WTC11 (cell line): ENCODE measurements at regions of chr7 and their contacts with region 1.

Region 1: GRCh38 chr7:66905689-66906088 is 15.3 kb upstream of the TMEM248 start:
- DNase-seq: peak; percentile 40
- ATAC-seq: peak; percentile 78
- H3K4me3 Mint-ChIP-seq: no peak overlapping the region
- H3K27ac Mint-ChIP-seq: peak overlapping the region; percentile 87
- H3K4me1 Mint-ChIP-seq: no peaks in the 10 kb centered on the region
- H3K27me3 Mint-ChIP-seq: no peaks in the 10 kb centered on the region
- CTCF ChIP-seq: 0 out of 2 replicates have a peak, but pooled peaks have one; percentile 22

Region 2: DNA sequence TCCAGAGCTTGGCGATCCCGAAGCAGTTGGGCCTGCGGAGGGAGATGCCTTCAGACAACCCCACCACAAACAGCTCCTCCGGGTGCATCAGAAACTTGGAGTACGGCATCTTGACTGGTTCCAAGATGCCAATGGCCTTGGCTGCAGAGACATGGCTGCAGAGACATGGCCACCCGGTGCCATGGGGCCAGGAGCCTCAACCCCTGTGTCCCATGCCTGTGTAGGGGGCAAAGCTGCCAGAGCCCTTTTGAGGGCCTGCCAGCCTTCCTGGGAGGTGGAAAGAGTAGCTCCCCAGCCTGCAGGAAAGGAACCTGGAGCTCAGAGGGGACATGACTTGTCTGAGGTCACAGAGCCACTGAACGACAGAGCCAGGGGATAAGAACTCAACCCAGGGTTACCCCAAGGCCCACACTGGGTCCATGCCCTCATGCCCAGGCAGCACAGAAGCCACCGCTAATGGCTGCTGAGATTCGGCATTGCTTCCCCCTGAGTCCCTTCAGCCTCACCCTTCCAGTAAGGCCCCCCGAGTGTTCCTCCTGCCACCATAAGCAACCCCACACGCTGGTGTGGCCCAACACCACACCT is 81.6 kb before region 1 on chr7:
- CTCF ChIA-PET with region 1: interaction called, 17 read pairs
- POLR2A ChIA-PET with region 1: no interaction called
- DNase-seq: no peak
- ATAC-seq: no peak
- H3K4me3 Mint-ChIP-seq: no peak overlapping the region
- H3K27ac Mint-ChIP-seq: no peak overlapping the region
- H3K4me1 Mint-ChIP-seq: no peaks in the 10 kb centered on the region
- H3K27me3 Mint-ChIP-seq: no peaks in the 10 kb centered on the region
- CTCF ChIP-seq: no peak

Region 3: DNA sequence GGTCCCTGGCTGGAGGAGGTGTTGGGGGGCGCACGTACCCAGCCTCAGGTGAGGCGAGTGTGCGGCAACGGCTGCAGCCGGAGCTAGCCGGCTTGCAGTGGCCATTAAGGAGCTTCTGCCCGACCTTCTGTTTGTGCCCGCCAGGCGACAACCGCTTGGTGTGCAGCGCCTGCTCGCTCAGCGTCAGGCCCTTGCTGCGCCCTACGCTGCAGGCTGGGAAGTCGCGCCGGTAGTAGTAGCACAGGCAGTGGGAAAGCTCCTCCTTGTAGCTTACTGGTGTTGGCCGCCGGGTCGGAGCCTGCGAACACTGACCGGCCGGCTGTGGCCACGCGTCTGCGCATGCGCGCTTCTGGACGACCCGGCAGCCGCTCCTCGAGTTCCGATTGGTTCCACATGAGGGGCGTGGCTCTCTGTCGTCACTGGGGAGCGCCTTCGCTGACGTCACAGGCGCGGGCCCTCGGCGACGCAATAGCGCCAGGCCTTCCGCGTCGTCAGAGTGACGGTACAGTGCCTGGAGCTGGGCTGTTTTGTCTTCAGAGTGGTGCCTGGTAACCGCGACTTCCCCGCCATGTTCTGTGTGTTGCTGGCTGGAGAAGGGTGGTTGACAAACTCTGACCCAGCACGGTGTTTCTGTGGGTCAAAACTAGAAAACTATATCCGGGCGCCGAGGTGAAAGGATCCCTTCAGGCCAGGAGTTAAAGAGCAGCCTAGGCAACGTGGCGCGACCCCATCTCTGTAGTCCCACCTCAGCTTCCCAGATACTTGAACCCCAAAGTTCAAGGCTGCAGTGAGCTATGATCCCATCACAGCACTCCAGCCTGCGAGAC is 60.9 kb before region 1 on chr7:
- CTCF ChIA-PET with region 1: interaction called, 17 read pairs
- POLR2A ChIA-PET with region 1: interaction called, 13 read pairs
- DNase-seq: peak; percentile 99
- ATAC-seq: peak; percentile 71
- H3K4me3 Mint-ChIP-seq: peak overlapping the region; percentile 92
- H3K27ac Mint-ChIP-seq: peak overlapping the region; percentile 99
- H3K4me1 Mint-ChIP-seq: peaks cover 37% of the 10 kb centered on the region
- H3K27me3 Mint-ChIP-seq: no peaks in the 10 kb centered on the region
- CTCF ChIP-seq: no peak

Region 4: GRCh38 chr7:66894463-66895080 is 11.1 kb before region 1 on chr7:
- CTCF ChIA-PET with region 1: interaction called, 27 read pairs
- POLR2A ChIA-PET with region 1: interaction called, 3 read pairs
- DNase-seq: peak; percentile 59
- ATAC-seq: peak; percentile 91
- H3K4me3 Mint-ChIP-seq: no peak overlapping the region
- H3K27ac Mint-ChIP-seq: peak overlapping the region; percentile 41
- H3K4me1 Mint-ChIP-seq: peaks cover 5% of the 10 kb centered on the region; the same call in 1 of the 2 replicates
- H3K27me3 Mint-ChIP-seq: no peaks in the 10 kb centered on the region
- CTCF ChIP-seq: no peak

Region 5: GRCh38 chr7:66920769-66921395 is 15.2 kb after region 1 on chr7 and contains the start of gene TMEM248:
- CTCF ChIA-PET with region 1: interaction called, 15 read pairs
- POLR2A ChIA-PET with region 1: interaction called, 3 read pairs
- DNase-seq: peak; percentile 66
- ATAC-seq: peak; percentile 68
- H3K4me3 Mint-ChIP-seq: peak within 1 kb of the TSS; percentile 97
- H3K27ac Mint-ChIP-seq: peak within 1 kb of the TSS; percentile 99
- H3K4me1 Mint-ChIP-seq: peaks cover 13% of the 10 kb centered on the region
- H3K27me3 Mint-ChIP-seq: no peaks in the 10 kb centered on the region; the same call in 1 of the 2 replicates
- CTCF ChIP-seq: no peak
- total RNA-seq, gene TMEM248: 56.9 to 60.4 TPM (median 59.1 TPM) in 3 replicates

Region 6: DNA sequence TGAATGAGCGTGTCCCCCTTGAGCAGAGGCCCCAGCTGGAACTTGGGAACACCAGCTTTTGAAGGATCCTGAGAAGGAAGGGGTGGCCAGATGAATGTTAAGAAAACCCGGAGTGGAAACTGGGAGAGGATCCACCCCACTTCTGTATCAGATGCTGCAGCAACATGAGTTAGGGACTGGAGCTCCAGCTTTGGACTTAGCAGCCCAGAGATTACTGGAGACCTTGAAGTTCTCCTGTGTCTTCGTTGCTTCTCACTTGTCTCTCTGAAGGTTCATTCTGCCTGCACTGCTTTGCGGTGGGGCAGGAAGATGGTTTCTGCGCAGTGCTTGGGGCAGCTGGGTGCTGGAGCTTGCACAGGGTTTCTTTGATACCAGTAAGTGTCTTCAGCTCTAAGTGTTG is 24.7 kb after region 1 on chr7:
- CTCF ChIA-PET with region 1: interaction called, 22 read pairs
- POLR2A ChIA-PET with region 1: no interaction called
- DNase-seq: peak; percentile 63
- ATAC-seq: peak; percentile 97
- H3K4me3 Mint-ChIP-seq: peak overlapping the region; percentile 55
- H3K27ac Mint-ChIP-seq: peak overlapping the region; percentile 69; the same call in 1 of the 2 replicates
- H3K4me1 Mint-ChIP-seq: peaks cover 24% of the 10 kb centered on the region
- H3K27me3 Mint-ChIP-seq: no peaks in the 10 kb centered on the region
- CTCF ChIP-seq: no peak

Region 7: DNA sequence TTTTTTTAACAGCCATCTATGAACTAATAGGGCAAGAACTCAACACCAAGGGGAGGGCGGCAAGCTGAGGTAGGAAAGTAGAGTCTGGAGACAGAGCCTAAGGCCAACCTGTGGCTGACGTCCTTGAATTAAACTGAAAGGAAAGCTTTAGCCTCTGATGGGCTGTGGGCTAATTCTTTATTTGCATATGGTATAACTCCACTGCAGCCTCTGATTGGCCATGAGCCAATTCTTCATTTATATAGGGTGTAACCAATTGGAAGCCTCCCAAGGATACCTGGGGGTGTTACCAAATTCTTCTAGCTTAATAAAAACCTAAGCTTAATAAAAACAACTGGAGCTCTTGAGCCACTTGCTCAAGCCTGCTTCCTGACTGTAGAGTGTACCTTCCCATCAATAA is 101.3 kb after region 1 on chr7:
- CTCF ChIA-PET with region 1: no interaction called
- POLR2A ChIA-PET with region 1: no interaction called
- DNase-seq: no peak
- ATAC-seq: no peak
- H3K4me3 Mint-ChIP-seq: no peak overlapping the region
- H3K27ac Mint-ChIP-seq: no peak overlapping the region
- H3K4me1 Mint-ChIP-seq: peaks cover 9% of the 10 kb centered on the region
- H3K27me3 Mint-ChIP-seq: no peaks in the 10 kb centered on the region
- CTCF ChIP-seq: no peak